Activated B cell treated with CpG ODN at 0.5 μM for 24 hours (primary cell): ENCODE measurements at regions of chr14 and their contacts with region 1.

Region 1: GRCh38 chr14:39266871-39267591 is 33.3 kb downstream of the MIA2 start:
- DNase-seq: peak; percentile 81
- ATAC-seq: peak; percentile 84
- H3K4me3 Mint-ChIP-seq: peak overlapping the region; percentile 96
- H3K27ac Mint-ChIP-seq: peak overlapping the region; percentile 99
- H3K4me1 Mint-ChIP-seq: peaks cover 53% of the 10 kb centered on the region
- H3K27me3 Mint-ChIP-seq: no peaks in the 10 kb centered on the region
- CTCF ChIP-seq: no peak

Region 2: DNA sequence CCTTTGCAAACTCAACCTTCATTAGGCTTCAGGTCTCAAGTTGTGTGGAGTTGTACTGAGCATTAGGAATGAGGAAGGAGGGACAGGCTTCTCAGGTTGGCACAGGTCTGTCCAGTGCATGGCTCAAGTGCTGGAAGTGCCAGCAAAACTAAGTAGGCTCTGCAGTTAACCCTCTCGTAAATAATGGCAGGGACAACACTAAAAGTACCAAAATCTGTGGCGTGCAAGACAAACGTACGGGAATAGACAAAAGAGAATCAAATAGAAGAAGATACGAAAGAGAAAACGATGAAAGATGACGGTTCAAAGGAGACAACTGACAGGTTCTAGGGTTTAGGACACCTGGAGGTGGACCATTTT is 97.5 kb before region 1 on chr14:
- CTCF ChIA-PET with region 1: no interaction called
- POLR2A ChIA-PET with region 1: interaction called, 80 read pairs
- intact Hi-C with region 1: loop called (anchors 1 kb)
- DNase-seq: no peak
- ATAC-seq: no peak
- H3K4me3 Mint-ChIP-seq: peak overlapping the region; percentile 98
- H3K27ac Mint-ChIP-seq: peak overlapping the region; percentile 98
- H3K4me1 Mint-ChIP-seq: peaks cover 39% of the 10 kb centered on the region
- H3K27me3 Mint-ChIP-seq: no peaks in the 10 kb centered on the region
- CTCF ChIP-seq: no peak

Region 3: GRCh38 chr14:39174560-39175444 is 92.2 kb before region 1 on chr14 and contains the start of gene PNN:
- CTCF ChIA-PET with region 1: no interaction called
- POLR2A ChIA-PET with region 1: interaction called, 80 read pairs
- intact Hi-C with region 1: loop called (anchors 1 kb)
- DNase-seq: peak; percentile 87
- ATAC-seq: peak; percentile 82
- H3K4me3 Mint-ChIP-seq: peak within 1 kb of the TSS; percentile 99
- H3K27ac Mint-ChIP-seq: peak within 1 kb of the TSS; percentile 99
- H3K4me1 Mint-ChIP-seq: peaks cover 41% of the 10 kb centered on the region
- H3K27me3 Mint-ChIP-seq: no peaks in the 10 kb centered on the region
- CTCF ChIP-seq: no peak
- total RNA-seq, gene PNN: 102 and 109 TPM in 2 replicates

Region 4: DNA sequence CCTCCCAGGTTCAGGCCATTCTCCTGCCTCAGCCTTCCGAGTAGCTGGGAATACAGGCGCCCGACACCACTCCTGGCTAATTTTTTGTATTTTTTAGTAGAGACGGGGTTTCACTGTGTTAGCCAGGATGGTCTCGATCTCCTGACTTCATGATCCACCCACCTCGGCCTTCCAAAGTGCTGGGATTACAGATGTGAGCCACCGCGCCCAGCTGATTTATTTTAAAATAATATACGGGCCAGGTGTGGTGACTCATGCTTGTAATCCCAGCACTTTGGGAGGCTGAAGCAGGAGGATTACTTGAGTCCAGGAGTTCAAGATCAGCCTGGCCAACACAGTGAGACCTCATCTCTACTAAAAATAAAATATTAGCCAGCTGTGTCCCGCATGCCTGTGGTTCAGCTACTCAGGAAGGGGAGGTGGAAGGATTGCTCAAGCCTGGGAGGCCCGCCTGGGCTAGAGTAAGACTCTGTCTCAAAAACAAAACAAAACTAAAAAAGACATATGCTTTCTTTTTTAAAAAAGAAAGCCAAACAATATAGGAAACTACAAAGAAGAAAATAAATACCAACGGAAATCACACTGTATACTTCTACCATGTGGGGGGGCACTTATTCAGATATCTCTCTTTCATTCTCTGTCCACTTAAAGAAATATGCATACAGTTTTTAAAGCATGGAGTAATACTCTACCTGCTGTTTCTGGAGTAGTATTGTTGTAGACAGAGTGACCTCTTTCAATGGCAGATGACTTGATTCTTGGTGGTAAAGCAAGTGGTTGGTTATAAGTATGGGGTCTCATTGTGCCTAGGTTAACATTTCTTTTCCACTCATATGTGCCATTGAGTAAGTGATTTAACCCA is 34.2 kb before region 1 on chr14:
- CTCF ChIA-PET with region 1: no interaction called
- POLR2A ChIA-PET with region 1: interaction called, 4 read pairs
- intact Hi-C with region 1: loop called (anchors 2 kb)
- DNase-seq: no peak
- ATAC-seq: no peak
- H3K4me3 Mint-ChIP-seq: no peak overlapping the region
- H3K27ac Mint-ChIP-seq: no peak overlapping the region
- H3K4me1 Mint-ChIP-seq: no peaks in the 10 kb centered on the region
- H3K27me3 Mint-ChIP-seq: no peaks in the 10 kb centered on the region
- CTCF ChIP-seq: no peak